Sciatic nerve (tissue), 2 donors: ENCODE measurements at regions of chr19 and their contacts with region 1.

Region 1: GRCh38 chr19:15555759-15556633 is 47.7 kb downstream of the CYP4F22 start:
- DNase-seq: peak; percentile 91
- ATAC-seq: peak; percentile 93

Region 2: DNA sequence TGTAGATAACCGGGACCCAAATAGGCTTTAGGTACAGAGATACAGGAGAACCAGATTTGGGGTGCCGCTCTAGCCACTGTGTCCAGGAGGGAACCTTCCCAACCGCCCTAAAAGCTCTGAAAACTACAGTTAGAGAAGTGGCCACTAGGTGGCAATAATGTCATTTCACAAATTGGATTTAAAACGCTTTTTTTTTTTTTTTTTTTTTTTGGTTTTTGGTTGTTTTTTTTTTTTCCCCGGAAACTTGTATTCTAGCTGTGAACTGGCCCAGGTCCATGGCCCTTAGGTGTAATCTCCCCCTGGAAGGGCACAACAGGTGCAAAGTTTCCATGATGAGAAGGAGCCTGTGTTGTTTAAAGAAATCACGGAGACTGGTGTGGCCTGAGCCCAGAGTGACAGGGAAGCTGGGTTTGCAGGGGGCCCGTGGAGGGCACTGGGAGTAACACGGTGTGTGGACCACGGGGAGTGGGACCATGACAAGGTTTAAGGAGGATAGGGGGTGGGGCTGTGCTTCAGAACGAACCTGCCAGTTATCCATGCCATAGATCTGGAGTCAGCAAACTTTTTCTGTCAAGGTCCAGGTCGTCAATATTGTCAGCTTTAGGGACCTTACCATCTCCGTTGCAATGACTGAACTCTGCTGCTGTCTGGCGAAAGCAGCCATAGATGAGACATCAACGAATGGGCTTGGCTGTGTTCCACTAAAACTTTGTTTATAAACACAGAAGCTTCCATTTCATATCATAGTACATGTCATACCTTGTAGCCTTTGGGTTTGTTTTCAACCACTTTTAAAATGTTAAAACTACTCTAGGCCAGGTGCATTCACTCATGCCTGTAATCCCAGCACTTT is 463.9 kb before region 1 on chr19:
- intact Hi-C with region 1: loop called (anchors 5 kb)
- DNase-seq: no peak
- ATAC-seq: peak; percentile 66

Region 3: DNA sequence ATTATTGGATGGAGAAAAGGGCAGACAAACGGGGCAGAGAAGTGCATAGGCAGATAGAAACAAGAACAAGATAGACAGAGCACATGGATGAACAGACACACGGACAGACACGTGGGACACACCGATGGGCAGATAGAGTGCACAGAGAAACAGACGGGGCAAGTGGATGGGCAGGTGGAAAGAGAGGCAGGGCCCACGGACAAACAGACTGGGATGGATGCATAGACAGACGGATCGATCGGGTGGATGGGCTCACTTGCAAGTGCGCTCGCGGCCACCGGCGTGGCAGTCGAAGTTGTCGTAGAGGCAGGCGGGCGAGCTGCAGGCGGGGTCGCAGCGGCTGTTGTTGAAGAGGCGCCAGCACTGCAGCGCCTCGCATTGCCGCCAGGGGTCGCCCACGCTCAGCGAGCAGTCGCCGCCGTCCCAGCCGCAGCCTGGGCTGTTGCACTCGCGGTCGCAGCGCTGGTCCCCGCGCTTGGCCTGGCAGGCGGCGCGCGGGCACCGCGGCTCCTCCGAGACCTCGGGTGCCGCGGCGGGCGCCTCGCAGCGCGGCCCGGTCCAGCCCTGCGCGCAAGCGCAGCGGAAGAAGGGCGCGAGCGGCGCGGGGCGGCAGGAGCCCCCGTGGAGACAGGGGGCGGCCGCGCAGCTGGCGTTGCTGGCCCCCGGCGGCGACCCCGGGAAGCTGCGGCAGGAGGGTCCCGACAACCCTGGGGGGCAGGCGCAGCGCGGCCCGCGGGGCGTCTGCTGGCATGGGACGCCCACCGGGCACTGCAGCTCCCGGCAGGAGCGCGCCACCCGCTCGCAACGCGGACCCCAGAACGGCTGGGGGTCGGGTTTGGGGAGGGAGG is 378.5 kb before region 1 on chr19:
- intact Hi-C with region 1: loop called (anchors 5 kb)
- DNase-seq: peak; percentile 91
- ATAC-seq: peak; percentile 75

Region 4: DNA sequence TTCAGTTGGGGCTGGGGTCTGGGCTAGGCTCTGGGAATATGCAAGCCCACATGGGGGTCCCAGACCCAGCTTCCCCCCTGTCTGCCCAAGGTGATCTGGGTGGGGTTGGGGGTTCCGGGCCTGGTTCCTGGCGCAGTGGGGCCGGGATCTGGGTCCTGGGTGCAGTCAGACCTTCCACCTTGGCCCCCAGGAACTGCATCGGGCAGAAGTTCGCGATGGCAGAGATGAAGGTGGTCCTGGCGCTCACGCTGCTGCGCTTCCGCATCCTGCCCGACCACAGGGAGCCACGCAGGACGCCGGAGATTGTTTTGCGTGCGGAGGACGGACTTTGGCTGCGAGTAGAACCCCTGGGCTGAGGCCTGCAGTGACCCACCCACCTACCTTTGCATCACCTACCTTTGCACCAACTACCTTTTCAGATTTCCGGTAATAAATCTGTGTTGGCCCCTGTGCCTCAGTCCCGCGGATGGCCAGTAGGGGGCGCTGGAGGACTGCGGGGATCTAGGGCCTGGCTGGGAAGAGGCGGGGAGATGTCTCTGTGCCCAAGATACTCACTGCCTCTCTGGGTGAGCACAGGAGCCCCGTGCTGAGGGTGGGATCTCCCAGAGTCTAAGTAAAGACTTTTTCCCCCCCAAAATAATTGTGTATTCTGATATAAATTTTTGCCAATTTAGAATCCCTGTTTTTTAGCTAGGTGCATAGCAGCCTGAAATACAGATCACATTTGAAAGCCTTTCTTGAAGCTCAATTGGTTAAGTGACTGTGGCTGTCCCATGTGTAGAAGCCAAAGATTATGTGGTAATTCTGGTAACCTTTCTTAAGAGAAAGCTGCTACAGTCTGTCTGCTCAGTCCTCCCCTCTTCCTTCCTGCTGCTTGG is 73.2 kb after region 1 on chr19:
- intact Hi-C with region 1: no loop called
- DNase-seq: peak; percentile 92
- ATAC-seq: peak; percentile 94